ENCODE measurements at regions of chr4 and their contacts with region 1.

Region 1: GRCh38 chr4:100093091-100093866 is 97.0 kb downstream of the DDIT4L start:
- DNase-seq: peak; percentile 94
- H3K4me3 Mint-ChIP-seq: peak overlapping the region; percentile 43
- H3K27ac Mint-ChIP-seq: peak overlapping the region; percentile 91
- H3K4me1 Mint-ChIP-seq: peaks cover 42% of the 10 kb centered on the region
- H3K27me3 Mint-ChIP-seq: no peaks in the 10 kb centered on the region

Region 2: GRCh38 chr4:99563310-99564186 is 529.7 kb before region 1 on chr4 and contains the start of gene TRMT10A:
- intact Hi-C with region 1: loop called (anchors 10 kb)
- DNase-seq: peak; percentile 97
- H3K4me3 Mint-ChIP-seq: peak within 1 kb of the TSS; percentile 97
- H3K27ac Mint-ChIP-seq: peak within 1 kb of the TSS; percentile 99
- H3K4me1 Mint-ChIP-seq: peaks cover 16% of the 10 kb centered on the region
- H3K27me3 Mint-ChIP-seq: peaks cover 13% of the 10 kb centered on the region
- total RNA-seq, gene TRMT10A: 7.4 and 8.6 TPM in 2 replicates

Region 3: GRCh38 chr4:100082852-100083251 is 10.4 kb before region 1 on chr4:
- intact Hi-C with region 1: loop called (anchors 1 kb)
- DNase-seq: no peak
- H3K4me3 Mint-ChIP-seq: no peak overlapping the region
- H3K27ac Mint-ChIP-seq: peak overlapping the region; percentile 30
- H3K4me1 Mint-ChIP-seq: peaks cover 28% of the 10 kb centered on the region
- H3K27me3 Mint-ChIP-seq: no peaks in the 10 kb centered on the region

Region 4: GRCh38 chr4:100823066-100823992 is 730.0 kb after region 1 on chr4:
- intact Hi-C with region 1: loop called (anchors 5 kb)
- DNase-seq: peak; percentile 65
- H3K4me3 Mint-ChIP-seq: no peak overlapping the region
- H3K27ac Mint-ChIP-seq: peak overlapping the region; percentile 86
- H3K4me1 Mint-ChIP-seq: peaks cover 19% of the 10 kb centered on the region
- H3K27me3 Mint-ChIP-seq: no peaks in the 10 kb centered on the region

Region 5: DNA sequence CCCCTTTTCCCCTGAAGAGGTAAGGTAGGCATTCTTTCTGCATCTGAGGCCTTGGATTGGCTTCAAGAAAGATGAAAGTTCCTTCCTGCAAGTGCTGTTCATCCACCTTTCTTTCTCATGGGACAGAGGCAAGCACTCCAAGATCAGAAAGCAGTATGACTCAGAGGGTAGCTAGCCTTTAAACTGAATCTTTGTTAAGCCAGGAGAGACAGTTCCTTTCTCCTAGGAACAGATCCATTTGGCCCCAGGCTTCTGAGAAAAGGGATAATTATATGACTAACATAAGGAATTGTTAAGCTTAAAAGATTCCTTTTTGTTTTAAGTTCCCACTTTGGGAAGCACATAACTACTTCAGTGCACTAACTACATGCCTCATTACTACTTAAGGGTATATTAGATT is 1062.1 kb after region 1 on chr4:
- intact Hi-C with region 1: loop called (anchors 5 kb)
- DNase-seq: no peak
- H3K4me3 Mint-ChIP-seq: no peak overlapping the region
- H3K27ac Mint-ChIP-seq: no peak overlapping the region
- H3K4me1 Mint-ChIP-seq: peaks cover 22% of the 10 kb centered on the region
- H3K27me3 Mint-ChIP-seq: no peaks in the 10 kb centered on the region

Region 6: GRCh38 chr4:101596781-101597552 is 1503.7 kb after region 1 on chr4:
- intact Hi-C with region 1: loop called (anchors 10 kb)
- DNase-seq: peak; percentile 73
- H3K4me3 Mint-ChIP-seq: no peak overlapping the region
- H3K27ac Mint-ChIP-seq: no peak overlapping the region
- H3K4me1 Mint-ChIP-seq: peaks cover 2% of the 10 kb centered on the region
- H3K27me3 Mint-ChIP-seq: peaks cover 5% of the 10 kb centered on the region